Heart left ventricle (tissue), 16 donors: ENCODE measurements at regions of chr7 and their contacts with region 1.

Region 1: GRCh38 chr7:455110-455928 is 64.3 kb downstream of the PDGFA start:
- DNase-seq: peak; percentile 68 to 86 (median 83)
- ATAC-seq: peak in 3 of 4 donors; percentile 11 to 60 (median 56)
- H3K4me3 ChIP-seq: no peak overlapping the region
- H3K27ac ChIP-seq: peak overlapping the region in 1 of 12 donors; percentile 29
- H3K4me1 ChIP-seq: peaks cover 0 to 31% (median 13%) of the 10 kb centered on the region in 12 donors
- H3K27me3 ChIP-seq: peaks cover 0 to 25% (median 11%) of the 10 kb centered on the region in 9 donors
- CTCF ChIP-seq: no peak
- POLR2A ChIP-seq: no peak

Region 2: GRCh38 chr7:391411-391951 is 63.8 kb before region 1 on chr7:
- intact Hi-C with region 1: loop called in 1 of 10 experiments (anchors 10 kb)
- DNase-seq: peak in 4 of 5 donors; percentile 11 to 48 (median 17)
- ATAC-seq: peak in 1 of 4 donors; percentile 7
- H3K4me3 ChIP-seq: no peak overlapping the region
- H3K27ac ChIP-seq: no peak overlapping the region
- H3K4me1 ChIP-seq: peaks cover 0 to 9% (median 0%) of the 10 kb centered on the region in 12 donors
- H3K27me3 ChIP-seq: no peaks in the 10 kb centered on the region
- CTCF ChIP-seq: no peak
- POLR2A ChIP-seq: no peak